Psoas muscle (tissue), 8 donors: ENCODE measurements at regions of chr10 and their contacts with region 1.

Region 1: DNA sequence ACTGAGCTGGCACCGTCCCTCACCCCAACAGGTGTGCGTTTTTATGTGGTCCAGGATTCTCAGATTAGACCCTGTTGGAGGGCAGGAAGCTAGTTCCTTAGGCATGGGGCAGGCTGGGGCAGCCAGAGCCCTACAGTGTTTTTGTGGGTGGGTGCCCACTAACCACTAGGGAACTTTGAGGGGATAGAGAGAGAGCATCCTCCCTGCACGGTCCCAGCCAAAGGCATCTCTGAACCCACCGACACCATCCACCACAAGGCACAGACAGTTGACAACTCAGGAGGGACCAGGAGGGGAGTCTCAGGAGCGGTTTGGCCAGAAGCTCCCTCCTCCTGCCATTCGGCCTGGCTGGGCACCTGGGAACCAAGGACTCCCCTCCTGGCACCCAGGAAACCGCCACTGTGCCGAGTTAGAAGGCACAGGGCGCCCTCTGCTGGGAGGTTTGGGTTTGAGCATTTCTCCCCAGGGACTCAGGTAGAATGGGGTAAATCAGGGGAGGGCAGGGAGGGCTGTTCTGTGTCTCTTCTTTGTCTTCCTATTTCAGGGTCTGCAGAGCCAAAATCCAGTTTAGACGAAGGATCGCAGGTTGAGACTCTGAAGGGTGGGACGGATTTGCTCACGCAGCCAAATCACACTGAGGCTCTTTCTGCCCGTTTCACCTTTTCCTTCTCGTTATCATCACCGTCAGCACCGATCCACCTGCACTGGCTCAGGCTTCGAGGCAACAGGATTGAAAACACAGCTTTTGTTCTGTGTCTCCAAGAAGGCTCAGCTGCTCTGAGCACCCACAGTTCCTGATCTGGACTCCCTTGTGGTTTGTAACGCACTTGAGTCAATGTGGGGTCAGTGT is 84.8 kb upstream of the COL13A1 start:
- DNase-seq: peak; percentile 54 to 71
- ATAC-seq: peak; percentile 45 to 70 (median 52)
- H3K4me3 ChIP-seq: no peak overlapping the region
- H3K27ac ChIP-seq: no peak overlapping the region
- H3K4me1 ChIP-seq: peaks cover 6% of the 10 kb centered on the region
- H3K27me3 ChIP-seq: no peaks in the 10 kb centered on the region
- CTCF ChIP-seq: peak; percentile 66

Region 2: GRCh38 chr10:69425511-69426298 is 291.2 kb before region 1 on chr10:
- intact Hi-C with region 1: loop called in 1 of 2 experiments (anchors 10 kb)
- DNase-seq: no peak
- ATAC-seq: no peak
- H3K4me3 ChIP-seq: no peak overlapping the region
- H3K27ac ChIP-seq: no peak overlapping the region
- H3K4me1 ChIP-seq: peaks cover 11% of the 10 kb centered on the region
- H3K27me3 ChIP-seq: no peaks in the 10 kb centered on the region
- CTCF ChIP-seq: no peak

Region 3: DNA sequence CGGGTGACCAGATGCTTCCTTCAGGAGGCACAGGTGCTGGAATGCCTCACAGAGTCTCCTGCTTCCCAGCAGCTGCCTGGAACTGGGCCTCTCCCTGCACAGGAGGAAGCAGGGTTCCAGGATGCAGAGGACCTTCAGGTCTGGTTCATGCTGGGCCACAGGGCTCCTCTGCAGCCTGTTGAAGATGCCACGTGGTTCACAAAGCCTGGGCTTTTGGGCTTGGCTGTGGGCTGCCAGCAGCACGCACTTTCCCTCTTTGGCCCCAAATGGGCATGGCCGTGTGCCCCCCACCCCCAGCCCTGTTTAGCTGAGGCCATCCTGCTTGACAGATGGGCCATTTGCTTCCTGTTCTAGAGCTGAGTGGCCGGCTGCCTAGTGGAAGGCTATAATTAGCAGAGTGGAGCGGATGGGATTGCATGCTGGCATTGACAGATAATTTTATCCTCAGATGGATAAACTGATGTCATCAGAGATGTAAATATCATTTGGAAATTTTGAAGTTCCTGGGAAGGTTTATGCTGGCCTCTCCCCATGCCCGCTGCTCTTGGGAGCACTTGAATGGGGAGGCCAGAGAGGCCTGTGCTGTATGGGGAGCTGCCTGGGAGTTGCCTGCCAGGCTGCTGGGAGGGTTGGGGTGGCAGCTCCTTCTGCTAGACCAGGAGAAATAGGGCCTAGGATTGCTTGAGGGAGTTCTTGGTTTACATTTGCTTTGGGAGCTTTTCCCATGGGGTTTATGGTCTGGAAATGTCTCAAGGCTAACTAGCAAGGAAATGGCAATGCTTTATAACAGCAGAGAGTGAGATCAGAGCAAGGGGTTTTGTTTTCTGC is 237.5 kb before region 1 on chr10:
- intact Hi-C with region 1: no loop called
- DNase-seq: peak; percentile 51 to 76
- ATAC-seq: peak; percentile 71 to 85 (median 78)
- H3K4me3 ChIP-seq: peak overlapping the region; percentile 20
- H3K27ac ChIP-seq: peak overlapping the region; percentile 89
- H3K4me1 ChIP-seq: peaks cover 84% of the 10 kb centered on the region
- H3K27me3 ChIP-seq: no peaks in the 10 kb centered on the region
- CTCF ChIP-seq: no peak

Region 4: GRCh38 chr10:69515699-69516259 is 201.2 kb before region 1 on chr10:
- intact Hi-C with region 1: loop called in 1 of 2 experiments (anchors 10 kb)
- DNase-seq: peak in 1 of 2 donors; percentile 66
- ATAC-seq: peak; percentile 75 to 83 (median 83)
- H3K4me3 ChIP-seq: no peak overlapping the region
- H3K27ac ChIP-seq: no peak overlapping the region
- H3K4me1 ChIP-seq: no peaks in the 10 kb centered on the region
- H3K27me3 ChIP-seq: no peaks in the 10 kb centered on the region
- CTCF ChIP-seq: peak; percentile 58

Region 5: DNA sequence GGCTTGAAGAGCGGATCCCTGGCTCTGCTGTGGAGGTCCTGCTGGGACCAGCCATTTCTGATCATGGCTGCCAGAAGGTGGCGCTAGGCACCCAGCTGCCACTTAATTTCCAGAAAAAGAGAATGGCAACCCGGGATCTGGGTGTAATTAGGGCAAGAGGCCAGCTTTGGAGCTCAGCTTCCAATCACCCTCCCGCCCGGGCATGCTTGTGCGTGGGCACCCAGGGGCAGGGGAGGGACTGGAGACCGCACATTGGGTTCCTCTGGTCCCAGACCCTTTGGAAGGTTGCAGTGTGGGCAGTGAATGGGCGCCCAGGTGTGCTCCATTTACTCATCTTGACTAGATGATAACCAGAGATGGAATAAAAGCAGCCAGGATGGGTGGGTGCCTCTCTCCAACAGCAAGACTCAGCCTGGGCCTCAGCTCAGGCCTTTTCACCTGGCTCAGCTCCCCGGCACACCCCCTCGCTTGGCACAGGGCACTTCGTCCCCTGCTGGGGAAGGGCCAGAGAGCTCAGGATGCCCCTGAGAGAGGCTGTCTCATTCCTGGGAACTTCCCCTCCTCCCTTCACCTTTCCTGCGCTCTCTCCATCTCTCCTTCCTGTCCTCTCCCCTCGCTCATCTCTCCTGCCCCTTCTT is 72.2 kb before region 1 on chr10:
- intact Hi-C with region 1: loop called (anchors 1 to 2 kb)
- DNase-seq: peak; percentile 42 to 71
- ATAC-seq: peak; percentile 65 to 86 (median 71)
- H3K4me3 ChIP-seq: no peak overlapping the region
- H3K27ac ChIP-seq: no peak overlapping the region
- H3K4me1 ChIP-seq: no peaks in the 10 kb centered on the region
- H3K27me3 ChIP-seq: peaks cover 0 to 1% (median 0%) of the 10 kb centered on the region in 3 donors
- CTCF ChIP-seq: peak; percentile 91